Mammary epithelial cell (primary cell): ENCODE measurements at regions of chr10 and their contacts with region 1.

Region 1: DNA sequence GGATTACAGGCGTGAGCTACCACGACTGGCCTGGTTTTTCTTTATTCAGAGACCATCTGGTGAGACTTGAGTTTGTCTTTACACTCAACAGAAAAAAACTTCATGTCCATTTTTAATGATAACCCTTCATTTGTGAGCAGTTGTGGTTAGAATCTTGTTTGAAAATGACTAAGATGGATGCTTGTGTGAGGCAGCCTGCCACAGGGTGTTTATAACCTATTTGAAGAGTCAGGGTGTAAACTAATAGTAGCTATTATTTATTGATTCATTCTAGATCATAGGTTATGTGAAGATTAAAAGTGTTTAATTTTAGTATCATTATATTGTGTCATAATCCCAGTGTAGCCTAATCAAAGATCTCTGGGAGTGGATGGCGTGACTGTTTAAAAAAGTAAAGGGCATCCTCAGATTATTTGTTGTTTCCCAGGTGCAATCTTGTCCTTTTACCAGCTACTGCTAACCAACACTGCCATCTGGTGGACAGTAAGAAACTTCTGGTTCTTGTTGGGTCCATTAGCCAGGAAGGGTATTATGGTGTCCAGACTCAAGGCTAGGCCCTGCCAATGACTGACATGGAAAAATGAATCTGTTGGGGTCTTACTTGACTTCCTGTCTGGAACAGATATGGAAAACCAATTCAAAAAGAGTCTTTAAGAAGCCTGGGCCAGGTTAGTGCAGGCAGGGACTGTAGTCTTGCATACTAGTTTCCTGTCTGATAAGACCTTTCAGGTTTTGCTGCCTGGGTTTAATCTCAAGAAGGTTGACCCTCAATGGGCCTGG is 24.9 kb downstream of the NRBF2 start:
- DNase-seq: peak; percentile 69
- H3K4me3 ChIP-seq: no peak overlapping the region
- H3K27ac ChIP-seq: no peak overlapping the region
- H3K4me1 ChIP-seq: no peaks in the 10 kb centered on the region
- H3K27me3 ChIP-seq: no peaks in the 10 kb centered on the region
- CTCF ChIP-seq: peak; percentile 51 to 78

Region 2: DNA sequence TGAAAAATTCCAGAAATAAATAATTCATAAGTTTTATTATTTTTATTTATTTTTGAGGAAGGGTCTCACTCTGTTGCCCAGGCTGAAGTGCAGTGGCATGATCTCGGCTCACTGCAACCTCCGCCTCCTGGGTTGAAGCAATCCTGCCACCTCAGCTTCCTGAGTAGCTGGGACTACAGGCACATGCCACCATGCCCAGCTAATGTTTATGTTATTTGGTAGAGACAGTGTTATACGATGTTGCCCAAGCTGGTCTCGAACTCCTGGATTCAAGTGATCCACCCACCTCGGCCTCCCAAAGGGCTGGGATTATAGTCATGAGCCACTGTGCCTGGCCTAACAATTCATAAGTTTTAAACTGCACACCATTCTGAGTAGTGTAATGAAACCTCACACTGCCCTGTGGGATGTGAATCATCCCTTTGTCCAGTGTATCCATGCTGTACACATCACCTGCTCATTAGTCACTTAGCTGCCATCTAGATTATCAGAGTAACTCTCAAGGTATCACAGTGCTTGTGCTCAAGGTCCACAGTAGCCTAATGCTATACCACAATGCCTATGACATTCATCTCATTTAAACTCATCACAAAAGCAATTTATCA is 907.3 kb before region 1 on chr10:
- CTCF ChIA-PET with region 1: no interaction called
- dilution Hi-C with region 1: no loop called
- in situ Hi-C with region 1: no loop called
- intact Hi-C with region 1: loop called (anchors 5 kb)
- DNase-seq: peak; percentile 98
- H3K4me3 ChIP-seq: no peak overlapping the region
- H3K27ac ChIP-seq: peak overlapping the region; percentile 51
- H3K4me1 ChIP-seq: no peaks in the 10 kb centered on the region
- H3K27me3 ChIP-seq: no peaks in the 10 kb centered on the region
- CTCF ChIP-seq: no peak

Region 3: DNA sequence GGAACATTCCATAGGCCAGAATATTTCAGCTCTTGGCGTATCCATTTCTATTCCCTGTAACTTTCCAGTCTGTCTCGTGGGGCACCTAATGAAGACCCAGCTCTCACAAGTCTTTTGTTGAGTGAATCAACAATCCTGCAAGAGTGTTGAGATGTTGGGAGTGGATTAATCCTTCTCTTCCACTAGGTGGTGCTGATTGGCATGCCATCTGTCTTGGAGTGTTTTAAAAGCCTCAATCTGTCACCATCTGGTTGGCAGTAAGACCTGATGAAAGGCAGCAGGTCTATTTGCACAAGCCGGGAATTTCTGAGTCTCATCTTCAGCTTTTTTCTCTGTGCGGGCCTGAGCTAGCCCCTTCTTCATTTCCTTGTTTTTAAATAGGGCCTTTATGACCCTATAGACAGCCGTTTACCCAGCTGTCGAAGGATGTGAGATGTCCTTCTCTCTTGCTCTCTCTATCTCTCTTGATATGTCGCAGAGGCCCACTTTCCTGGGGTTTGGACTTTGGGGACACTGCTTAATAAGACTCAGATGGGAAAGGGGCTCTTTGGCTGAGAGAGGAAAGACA is 603.3 kb before region 1 on chr10:
- CTCF ChIA-PET with region 1: no interaction called
- dilution Hi-C with region 1: no loop called
- in situ Hi-C with region 1: no loop called
- intact Hi-C with region 1: loop called (anchors 2 kb)
- DNase-seq: peak; percentile 54
- H3K4me3 ChIP-seq: no peak overlapping the region
- H3K27ac ChIP-seq: no peak overlapping the region
- H3K4me1 ChIP-seq: peaks cover under 1% of the 10 kb centered on the region
- H3K27me3 ChIP-seq: no peaks in the 10 kb centered on the region
- CTCF ChIP-seq: peak; percentile 57 to 77

Region 4: GRCh38 chr10:62610649-62611229 is 547.3 kb before region 1 on chr10:
- CTCF ChIA-PET with region 1: no interaction called
- dilution Hi-C with region 1: no loop called
- in situ Hi-C with region 1: loop called in 1 of 2 experiments (anchors 10 kb)
- intact Hi-C with region 1: loop called (anchors 1 kb)
- DNase-seq: peak; percentile 49
- H3K4me3 ChIP-seq: no peak overlapping the region
- H3K27ac ChIP-seq: no peak overlapping the region
- H3K4me1 ChIP-seq: peaks cover 7% of the 10 kb centered on the region
- H3K27me3 ChIP-seq: no peaks in the 10 kb centered on the region
- CTCF ChIP-seq: peak; percentile 88 to 96

Region 5: DNA sequence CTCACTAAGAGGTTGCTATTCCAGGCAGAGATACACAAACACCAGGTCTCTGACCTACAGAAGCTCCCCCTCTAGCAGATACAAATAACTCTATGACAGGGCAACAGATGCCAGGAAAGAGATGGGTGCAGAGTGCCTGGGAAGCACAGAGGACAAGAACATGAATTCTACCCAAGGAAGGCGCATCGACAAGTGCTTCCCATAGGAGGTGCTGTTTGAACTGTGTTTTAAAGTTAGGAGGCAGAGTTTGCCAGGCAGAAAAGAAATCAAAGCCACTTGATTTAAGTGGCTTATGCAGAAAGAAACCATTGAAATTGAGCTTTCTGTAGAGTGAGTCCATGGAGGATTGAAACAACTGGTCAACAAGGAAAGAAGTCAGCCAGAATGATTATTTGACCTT is 306.6 kb before region 1 on chr10:
- CTCF ChIA-PET with region 1: no interaction called
- dilution Hi-C with region 1: no loop called
- in situ Hi-C with region 1: no loop called
- intact Hi-C with region 1: loop called (anchors 1 kb)
- DNase-seq: no peak
- H3K4me3 ChIP-seq: no peak overlapping the region
- H3K27ac ChIP-seq: no peak overlapping the region
- H3K4me1 ChIP-seq: no peaks in the 10 kb centered on the region
- H3K27me3 ChIP-seq: no peaks in the 10 kb centered on the region
- CTCF ChIP-seq: peak; percentile 52 to 61

Region 6: DNA sequence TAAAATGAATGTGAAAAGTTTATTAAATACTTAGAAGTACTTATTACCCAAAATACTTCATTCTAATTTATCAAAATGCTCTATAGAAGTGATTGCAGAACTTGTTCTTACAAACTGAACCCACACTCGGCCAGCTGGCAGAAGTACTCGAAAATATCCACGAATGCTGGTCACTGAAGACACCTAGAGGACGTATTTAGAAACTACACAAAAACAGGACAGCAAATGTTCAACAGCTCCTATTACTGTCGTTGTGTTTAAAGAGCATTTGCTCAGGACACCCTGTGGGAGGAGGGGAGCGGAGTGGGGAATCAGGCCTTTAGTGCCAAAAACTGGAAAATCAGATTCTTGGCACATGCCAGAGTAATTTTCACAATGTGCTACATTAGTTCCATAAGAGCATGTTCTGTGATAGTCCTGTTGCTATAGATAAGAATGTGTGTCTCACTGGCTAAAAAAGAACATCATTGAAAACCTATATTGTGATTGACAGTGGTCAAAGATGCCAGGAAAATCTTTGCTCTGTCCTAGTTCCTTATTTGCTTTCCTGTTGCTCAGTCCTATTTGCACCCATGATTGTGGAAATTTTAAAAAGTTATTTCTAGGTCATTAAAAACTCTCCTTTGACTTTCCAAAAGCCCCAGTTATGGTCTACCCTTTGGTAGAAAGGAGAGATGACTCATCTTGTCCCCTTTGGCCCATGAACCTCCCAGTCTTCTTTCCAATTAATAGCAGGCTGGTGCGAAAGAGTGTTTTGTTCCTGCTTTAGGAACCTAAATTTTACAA is 73.9 kb before region 1 on chr10:
- CTCF ChIA-PET with region 1: interaction called, 3 read pairs
- dilution Hi-C with region 1: no loop called
- in situ Hi-C with region 1: no loop called
- intact Hi-C with region 1: loop called (anchors 1 kb)
- DNase-seq: peak; percentile 68
- H3K4me3 ChIP-seq: no peak overlapping the region
- H3K27ac ChIP-seq: no peak overlapping the region
- H3K4me1 ChIP-seq: no peaks in the 10 kb centered on the region
- H3K27me3 ChIP-seq: no peaks in the 10 kb centered on the region
- CTCF ChIP-seq: peak; percentile 66 to 73

Region 7: GRCh38 chr10:63819753-63820329 is 661.8 kb after region 1 on chr10:
- CTCF ChIA-PET with region 1: no interaction called
- dilution Hi-C with region 1: no loop called
- in situ Hi-C with region 1: no loop called
- intact Hi-C with region 1: loop called (anchors 5 kb)
- DNase-seq: peak; percentile 36
- H3K4me3 ChIP-seq: no peak overlapping the region
- H3K27ac ChIP-seq: no peak overlapping the region
- H3K4me1 ChIP-seq: no peaks in the 10 kb centered on the region
- H3K27me3 ChIP-seq: peaks cover 3% of the 10 kb centered on the region
- CTCF ChIP-seq: peak; percentile 87 to 93